Activated naive CD4-positive, alpha-beta T cell treated with anti-CD3 and anti-CD28 coated beads for 36 hours (primary cell): ENCODE measurements at regions of chrX and their contacts with region 1.

Region 1: GRCh38 chrX:19334945-19335626 is 8.6 kb upstream of the PDHA1 start:
- DNase-seq: peak; percentile 44
- H3K4me3 Mint-ChIP-seq: no peak overlapping the region
- H3K27ac Mint-ChIP-seq: no peak overlapping the region
- H3K4me1 Mint-ChIP-seq: no peaks in the 10 kb centered on the region
- H3K27me3 Mint-ChIP-seq: no peaks in the 10 kb centered on the region

Region 2: DNA sequence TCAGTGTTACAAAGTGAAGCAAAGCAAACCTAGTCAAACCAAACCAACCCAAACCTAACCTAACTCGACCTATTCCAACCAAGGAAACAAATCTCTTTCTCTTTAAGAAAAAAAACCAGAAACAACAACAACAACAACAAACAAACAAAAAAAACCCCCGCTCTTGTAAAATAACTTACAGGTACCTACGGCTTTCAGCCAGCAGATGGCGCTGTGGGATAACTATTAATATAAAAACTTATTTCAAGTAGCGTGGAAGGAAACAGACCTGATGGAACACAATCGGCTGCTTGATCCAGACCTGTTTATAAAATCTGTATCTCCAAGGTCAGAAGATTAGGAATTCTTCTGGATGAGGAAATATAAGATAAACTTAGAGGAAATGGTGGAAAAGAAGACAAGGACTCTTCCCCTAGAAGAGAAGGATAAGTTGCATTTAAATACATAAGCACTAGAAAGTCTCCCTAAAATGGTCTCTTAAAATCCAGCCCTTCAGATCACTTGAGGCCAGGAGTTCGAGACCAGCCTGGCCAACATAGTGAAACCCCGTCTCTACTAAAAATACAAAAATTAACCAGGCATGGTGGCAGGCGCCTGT is 944.0 kb before region 1 on chrX:
- CTCF ChIA-PET with region 1: no interaction called
- intact Hi-C with region 1: loop called (anchors 1 kb)
- DNase-seq: peak; percentile 70
- H3K4me3 Mint-ChIP-seq: no peak overlapping the region
- H3K27ac Mint-ChIP-seq: no peak overlapping the region
- H3K4me1 Mint-ChIP-seq: no peaks in the 10 kb centered on the region
- H3K27me3 Mint-ChIP-seq: no peaks in the 10 kb centered on the region

Region 3: GRCh38 chrX:18873189-18873791 is 461.8 kb before region 1 on chrX:
- CTCF ChIA-PET with region 1: no interaction called
- intact Hi-C with region 1: no loop called
- DNase-seq: no peak
- H3K4me3 Mint-ChIP-seq: no peak overlapping the region
- H3K27ac Mint-ChIP-seq: peak overlapping the region; percentile 13
- H3K4me1 Mint-ChIP-seq: peaks cover 5% of the 10 kb centered on the region
- H3K27me3 Mint-ChIP-seq: no peaks in the 10 kb centered on the region

Region 4: GRCh38 chrX:18931972-18932371 is 403.1 kb before region 1 on chrX:
- CTCF ChIA-PET with region 1: interaction called, 5 read pairs
- intact Hi-C with region 1: loop called (anchors 1 kb)
- DNase-seq: peak; percentile 7
- H3K4me3 Mint-ChIP-seq: no peak overlapping the region
- H3K27ac Mint-ChIP-seq: no peak overlapping the region
- H3K4me1 Mint-ChIP-seq: no peaks in the 10 kb centered on the region
- H3K27me3 Mint-ChIP-seq: no peaks in the 10 kb centered on the region

Region 5: GRCh38 chrX:18984381-18985185 is 350.5 kb before region 1 on chrX:
- CTCF ChIA-PET with region 1: interaction called, 3 read pairs
- intact Hi-C with region 1: loop called (anchors 2 kb)
- DNase-seq: peak; percentile 85
- H3K4me3 Mint-ChIP-seq: peak overlapping the region; percentile 88
- H3K27ac Mint-ChIP-seq: peak overlapping the region; percentile 88
- H3K4me1 Mint-ChIP-seq: peaks cover 11% of the 10 kb centered on the region
- H3K27me3 Mint-ChIP-seq: no peaks in the 10 kb centered on the region

Region 6: DNA sequence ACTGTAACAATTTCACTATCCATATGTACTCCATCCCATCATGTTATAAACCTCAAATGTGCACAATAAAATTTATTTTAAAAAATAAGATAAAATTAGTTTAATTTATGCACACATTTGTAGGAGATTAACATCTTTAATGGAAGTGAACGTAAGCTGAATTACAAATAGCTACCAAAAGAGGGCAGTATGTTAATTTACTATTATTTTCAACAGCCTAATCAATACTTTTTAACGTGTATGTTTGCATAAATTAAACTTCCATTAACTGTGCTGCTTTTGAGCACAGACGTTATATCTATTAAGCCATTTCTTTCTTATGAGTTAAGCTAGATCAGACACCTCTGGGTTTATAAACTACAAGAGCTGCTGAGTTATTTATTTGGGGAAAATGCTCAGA is 294.7 kb before region 1 on chrX:
- CTCF ChIA-PET with region 1: interaction called, 19 read pairs
- intact Hi-C with region 1: loop called (anchors 1 kb)
- DNase-seq: no peak
- H3K4me3 Mint-ChIP-seq: no peak overlapping the region
- H3K27ac Mint-ChIP-seq: no peak overlapping the region
- H3K4me1 Mint-ChIP-seq: no peaks in the 10 kb centered on the region
- H3K27me3 Mint-ChIP-seq: no peaks in the 10 kb centered on the region

Region 7: GRCh38 chrX:19194285-19195242 is 140.5 kb before region 1 on chrX:
- CTCF ChIA-PET with region 1: no interaction called
- intact Hi-C with region 1: loop called (anchors 10 kb)
- DNase-seq: no peak
- H3K4me3 Mint-ChIP-seq: no peak overlapping the region
- H3K27ac Mint-ChIP-seq: no peak overlapping the region
- H3K4me1 Mint-ChIP-seq: no peaks in the 10 kb centered on the region
- H3K27me3 Mint-ChIP-seq: no peaks in the 10 kb centered on the region

Region 8: GRCh38 chrX:19225924-19226323 is 109.2 kb before region 1 on chrX:
- CTCF ChIA-PET with region 1: no interaction called
- intact Hi-C with region 1: loop called (anchors 10 kb)
- DNase-seq: no peak
- H3K4me3 Mint-ChIP-seq: no peak overlapping the region
- H3K27ac Mint-ChIP-seq: no peak overlapping the region
- H3K4me1 Mint-ChIP-seq: no peaks in the 10 kb centered on the region
- H3K27me3 Mint-ChIP-seq: peaks cover 13% of the 10 kb centered on the region

Region 9: GRCh38 chrX:19270727-19271126 is 64.4 kb before region 1 on chrX:
- CTCF ChIA-PET with region 1: no interaction called
- intact Hi-C with region 1: no loop called
- DNase-seq: no peak
- H3K4me3 Mint-ChIP-seq: no peak overlapping the region
- H3K27ac Mint-ChIP-seq: no peak overlapping the region
- H3K4me1 Mint-ChIP-seq: no peaks in the 10 kb centered on the region
- H3K27me3 Mint-ChIP-seq: no peaks in the 10 kb centered on the region

Region 10: DNA sequence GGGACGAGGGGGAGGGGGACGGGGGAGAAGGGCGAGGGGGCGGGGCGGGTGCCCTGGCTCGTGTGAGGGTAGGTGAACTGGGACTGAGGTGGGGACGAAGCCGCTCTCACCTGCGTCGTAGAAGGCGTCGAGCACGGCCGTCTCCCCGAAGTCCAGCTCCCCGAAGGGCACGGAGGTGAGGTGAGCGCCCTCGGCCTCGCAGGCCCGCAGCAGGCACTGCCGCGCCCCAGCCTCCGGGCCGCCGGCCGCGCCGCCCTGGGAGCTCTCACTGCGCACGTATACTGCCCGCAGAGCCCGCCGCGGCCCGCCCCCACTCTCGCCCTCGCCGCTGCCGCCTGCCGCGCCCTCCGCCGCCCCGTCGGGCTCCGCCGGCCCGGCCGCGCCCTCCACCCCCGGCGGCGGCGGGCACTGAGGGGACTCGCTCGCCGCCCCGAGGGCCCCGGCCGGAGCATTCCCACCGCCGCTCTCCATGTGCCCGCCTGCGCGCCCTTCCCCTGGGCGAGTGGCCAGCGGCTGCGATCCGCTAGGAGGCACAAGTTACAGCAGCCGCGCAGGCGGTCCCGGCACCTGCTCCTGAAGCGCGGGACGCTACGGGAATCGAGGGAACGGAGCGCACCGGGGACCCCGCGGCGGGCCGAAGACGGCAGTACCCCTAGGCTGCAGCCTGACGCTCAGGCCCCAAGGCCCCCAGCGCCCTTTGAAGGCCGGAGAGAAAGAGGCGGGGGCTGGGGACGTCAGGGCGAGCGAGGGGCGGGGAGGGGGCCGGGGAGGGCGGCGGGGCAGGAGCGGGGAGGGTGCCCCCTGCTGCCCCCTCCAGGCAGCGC is 179.9 kb after region 1 on chrX and contains the start of gene MAP3K15:
- CTCF ChIA-PET with region 1: no interaction called
- intact Hi-C with region 1: no loop called
- DNase-seq: peak; percentile 15
- H3K4me3 Mint-ChIP-seq: peak within 1 kb of the TSS; percentile 50
- H3K27ac Mint-ChIP-seq: no peak within 1 kb of the TSS
- H3K4me1 Mint-ChIP-seq: no peaks in the 10 kb centered on the region
- H3K27me3 Mint-ChIP-seq: peaks cover 10% of the 10 kb centered on the region
- total RNA-seq, gene MAP3K15: 1.2 to 1.3 TPM

Region 11: DNA sequence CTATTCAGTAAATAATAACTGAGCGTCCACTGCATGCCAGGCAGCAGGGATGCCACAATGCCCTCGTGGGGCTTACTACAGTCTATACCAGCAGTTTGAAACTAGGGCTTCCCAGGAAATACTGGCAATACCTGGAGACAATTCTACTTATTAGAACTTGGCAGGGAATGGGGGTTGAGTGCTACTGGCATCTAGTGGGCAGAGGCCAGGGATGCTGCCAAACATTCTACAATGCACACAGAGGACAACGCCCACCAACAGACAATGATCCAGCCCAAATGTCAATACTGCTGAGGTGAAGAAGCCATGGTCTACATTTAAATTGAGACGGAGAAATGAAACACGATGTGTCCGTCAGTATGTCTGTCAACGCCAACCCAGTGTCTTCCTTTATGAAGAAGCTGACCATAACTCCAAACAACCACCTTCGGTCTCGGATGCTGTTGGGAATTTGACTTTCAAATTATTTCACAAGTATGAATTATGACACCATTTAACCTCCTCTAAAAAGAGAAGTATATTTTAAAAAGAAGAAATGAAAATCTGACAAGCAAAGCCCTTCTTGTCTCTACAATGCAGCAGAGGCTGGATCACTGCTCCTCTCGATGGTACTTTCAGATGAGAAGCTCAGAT is 303.9 kb after region 1 on chrX:
- CTCF ChIA-PET with region 1: no interaction called
- intact Hi-C with region 1: no loop called
- DNase-seq: no peak
- H3K4me3 Mint-ChIP-seq: no peak overlapping the region
- H3K27ac Mint-ChIP-seq: no peak overlapping the region
- H3K4me1 Mint-ChIP-seq: peaks cover 36% of the 10 kb centered on the region
- H3K27me3 Mint-ChIP-seq: no peaks in the 10 kb centered on the region